Naive thymus-derived CD4-positive, alpha-beta T cell (primary cell): ENCODE measurements at regions of chr16 and their contacts with region 1.

Region 1: DNA sequence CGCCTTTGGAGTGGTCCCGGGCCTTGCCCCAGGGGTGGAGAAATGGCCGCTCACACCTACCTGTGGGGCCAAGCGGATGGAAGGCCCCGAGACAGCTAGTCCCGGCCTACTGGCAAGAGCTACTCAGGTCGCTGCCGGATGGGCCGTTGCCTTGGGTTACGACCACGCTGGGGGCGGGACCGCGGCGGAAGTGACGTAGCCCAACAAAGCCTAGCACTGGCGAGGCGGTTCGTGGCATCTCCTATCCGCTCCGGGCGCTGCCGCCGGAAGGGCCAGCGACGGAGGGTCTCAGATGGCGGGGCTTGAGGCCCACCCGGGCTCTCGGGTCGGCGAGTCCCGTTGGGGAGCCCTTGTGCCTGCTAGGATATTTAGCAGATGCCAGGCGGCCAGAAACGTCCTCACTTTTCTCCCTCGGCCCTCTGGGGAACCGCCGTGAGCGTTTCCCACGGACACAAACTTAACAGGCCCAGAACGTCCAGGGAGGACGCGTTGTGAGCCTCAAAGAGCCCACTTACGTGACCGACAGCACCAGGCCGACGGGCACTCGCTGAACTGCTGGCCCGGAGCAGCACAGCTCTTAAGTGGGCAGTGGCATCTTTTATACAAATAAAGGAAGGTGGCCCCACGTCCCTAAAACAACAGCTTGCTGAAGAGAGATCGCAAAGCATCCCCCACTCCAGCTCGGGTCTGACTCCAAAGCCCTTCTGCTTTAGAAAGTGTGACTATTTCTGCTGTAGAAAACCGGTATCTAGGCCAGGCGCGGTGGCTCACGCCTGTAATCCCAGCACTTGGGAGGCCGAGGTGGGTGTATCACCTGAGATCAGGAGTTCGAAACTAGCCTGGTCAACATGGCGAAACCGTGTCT is at the start of gene C16orf46:
- DNase-seq: peak; percentile 93 to 99 (median 97)
- ATAC-seq: peak; percentile 85
- H3K4me3 ChIP-seq: peak within 1 kb of the TSS; percentile 96
- H3K4me3 Mint-ChIP-seq: peak within 1 kb of the TSS in 2 of 10 donors; percentile 39 to 57
- H3K27ac ChIP-seq: peak within 1 kb of the TSS; percentile 89
- H3K27ac Mint-ChIP-seq: peak within 1 kb of the TSS in 2 of 9 donors; percentile 89 to 91
- H3K4me1 ChIP-seq: peaks cover 10 to 11% of the 10 kb centered on the region in 2 donors
- H3K4me1 Mint-ChIP-seq: peaks cover 0 to 4% (median 0%) of the 10 kb centered on the region in 7 donors
- H3K27me3 ChIP-seq: no peaks in the 10 kb centered on the region
- H3K27me3 Mint-ChIP-seq: peaks cover 0 to 10% (median 0%) of the 10 kb centered on the region in 5 donors
- total RNA-seq, gene C16orf46: 0.24 to 2.1 (median 0.70) TPM in 4 of 5 experiments, not detected in the other

Region 2: GRCh38 chr16:80804056-80804450 is 273.3 kb before region 1 on chr16:
- CTCF ChIA-PET with region 1: no interaction called
- POLR2A ChIA-PET with region 1: no interaction called
- intact Hi-C with region 1: loop called (anchors 10 kb)
- DNase-seq: peak; percentile 26 to 69 (median 52)
- ATAC-seq: peak; percentile 69
- H3K4me3 ChIP-seq: no peak overlapping the region
- H3K4me3 Mint-ChIP-seq: peak overlapping the region; percentile 85 to 96 (median 94)
- H3K27ac ChIP-seq: no peak overlapping the region
- H3K27ac Mint-ChIP-seq: peak overlapping the region in 7 of 9 donors; percentile 46 to 98 (median 78)
- H3K4me1 ChIP-seq: peaks cover 0 to 10% of the 10 kb centered on the region in 2 donors
- H3K4me1 Mint-ChIP-seq: peaks cover 12 to 59% (median 18%) of the 10 kb centered on the region in 7 donors
- H3K27me3 ChIP-seq: no peaks in the 10 kb centered on the region
- H3K27me3 Mint-ChIP-seq: peaks cover 0 to 9% (median 0%) of the 10 kb centered on the region in 5 donors

Region 3: GRCh38 chr16:80948886-80949493 is 128.3 kb before region 1 on chr16:
- CTCF ChIA-PET with region 1: no interaction called
- POLR2A ChIA-PET with region 1: no interaction called
- intact Hi-C with region 1: no loop called
- DNase-seq: peak in 1 of 9 donors; percentile 40
- ATAC-seq: no peak
- H3K4me3 ChIP-seq: no peak overlapping the region
- H3K4me3 Mint-ChIP-seq: no peak overlapping the region
- H3K27ac ChIP-seq: no peak overlapping the region
- H3K27ac Mint-ChIP-seq: no peak overlapping the region
- H3K4me1 ChIP-seq: no peaks in the 10 kb centered on the region
- H3K4me1 Mint-ChIP-seq: peaks cover 0 to 3% (median 0%) of the 10 kb centered on the region in 7 donors
- H3K27me3 ChIP-seq: no peaks in the 10 kb centered on the region
- H3K27me3 Mint-ChIP-seq: peaks cover 2 to 23% (median 13%) of the 10 kb centered on the region in 5 donors

Region 4: GRCh38 chr16:81035398-81035974 is 41.8 kb before region 1 on chr16 and contains the start of gene ATMIN:
- CTCF ChIA-PET with region 1: interaction called, 14 read pairs
- POLR2A ChIA-PET with region 1: interaction called, 13 read pairs
- intact Hi-C with region 1: loop called (anchors 1 kb)
- DNase-seq: peak; percentile 80 to 96 (median 90)
- ATAC-seq: peak; percentile 100
- H3K4me3 ChIP-seq: peak within 1 kb of the TSS; percentile 52
- H3K4me3 Mint-ChIP-seq: peak within 1 kb of the TSS; percentile 79 to 92 (median 89)
- H3K27ac ChIP-seq: peak within 1 kb of the TSS; percentile 69
- H3K27ac Mint-ChIP-seq: peak within 1 kb of the TSS; percentile 29 to 87 (median 77)
- H3K4me1 ChIP-seq: peaks cover 20 to 24% of the 10 kb centered on the region in 2 donors
- H3K4me1 Mint-ChIP-seq: peaks cover 16 to 44% (median 39%) of the 10 kb centered on the region in 7 donors
- H3K27me3 ChIP-seq: no peaks in the 10 kb centered on the region
- H3K27me3 Mint-ChIP-seq: no peaks in the 10 kb centered on the region
- total RNA-seq, gene ATMIN: 29.1 to 46.9 (median 35.3) TPM

Region 5: DNA sequence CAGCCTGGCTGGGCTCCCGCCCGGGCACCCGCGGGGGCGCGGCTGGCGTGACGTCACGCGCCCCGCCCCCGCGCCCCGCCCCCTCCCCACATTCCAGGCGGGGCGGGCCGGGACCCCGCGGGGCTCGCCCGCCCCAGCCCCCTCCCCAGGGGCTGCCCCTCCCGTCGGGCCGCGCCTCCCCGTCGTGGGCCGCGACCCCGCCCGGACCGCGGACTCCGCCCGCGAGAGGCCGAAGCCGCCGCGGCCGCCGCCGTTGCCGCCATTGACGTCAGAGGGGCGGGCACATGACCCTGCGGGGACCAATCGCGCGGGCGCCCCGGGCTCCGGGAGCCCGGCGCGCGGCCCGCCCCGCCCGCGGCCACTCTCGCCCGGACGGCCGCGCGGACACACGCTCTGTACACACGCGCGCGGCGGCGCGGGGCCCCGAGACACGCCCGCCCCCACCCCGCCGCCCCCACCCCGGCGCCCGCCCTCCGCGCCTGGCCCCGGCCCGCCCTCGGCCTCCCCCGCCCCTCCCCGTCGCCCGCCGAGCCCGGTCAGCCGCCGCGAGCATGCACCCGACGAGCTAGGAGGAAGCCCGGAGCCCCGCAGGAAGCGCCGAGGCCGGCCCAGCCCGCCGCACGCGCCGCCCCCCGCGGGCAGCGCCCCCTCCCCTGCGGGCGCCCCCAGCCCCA is 367.3 kb after region 1 on chr16 and contains the start of gene CMIP:
- CTCF ChIA-PET with region 1: no interaction called
- POLR2A ChIA-PET with region 1: no interaction called
- intact Hi-C with region 1: loop called in 1 of 2 experiments (anchors 5 kb)
- DNase-seq: peak; percentile 66 to 89 (median 79)
- ATAC-seq: peak; percentile 88
- H3K4me3 ChIP-seq: peak within 1 kb of the TSS; percentile 91
- H3K4me3 Mint-ChIP-seq: peak within 1 kb of the TSS; percentile 85 to 94 (median 90)
- H3K27ac ChIP-seq: peak within 1 kb of the TSS; percentile 77
- H3K27ac Mint-ChIP-seq: peak within 1 kb of the TSS; percentile 90 to 97 (median 94)
- H3K4me1 ChIP-seq: peaks cover 35 to 37% of the 10 kb centered on the region in 2 donors
- H3K4me1 Mint-ChIP-seq: peaks cover 26 to 54% (median 48%) of the 10 kb centered on the region in 7 donors
- H3K27me3 ChIP-seq: no peaks in the 10 kb centered on the region
- H3K27me3 Mint-ChIP-seq: peaks cover 0 to 41% (median 0%) of the 10 kb centered on the region in 5 donors
- total RNA-seq, gene CMIP: 28.9 to 75.4 (median 38.2) TPM

Region 6: GRCh38 chr16:81745704-81746558 is 668.6 kb after region 1 on chr16:
- CTCF ChIA-PET with region 1: no interaction called
- POLR2A ChIA-PET with region 1: no interaction called
- intact Hi-C with region 1: loop called (anchors 1 to 5 kb)
- DNase-seq: peak; percentile 53 to 75 (median 71)
- ATAC-seq: peak; percentile 97
- H3K4me3 ChIP-seq: peak overlapping the region; percentile 66
- H3K4me3 Mint-ChIP-seq: peak overlapping the region; percentile 82 to 90 (median 86)
- H3K27ac ChIP-seq: peak overlapping the region; percentile 65
- H3K27ac Mint-ChIP-seq: peak overlapping the region; percentile 83 to 95 (median 88)
- H3K4me1 ChIP-seq: peaks cover 4 to 10% of the 10 kb centered on the region in 2 donors
- H3K4me1 Mint-ChIP-seq: peaks cover 6 to 33% (median 10%) of the 10 kb centered on the region in 7 donors
- H3K27me3 ChIP-seq: no peaks in the 10 kb centered on the region
- H3K27me3 Mint-ChIP-seq: peaks cover 0 to 6% (median 0%) of the 10 kb centered on the region in 5 donors

Region 7: DNA sequence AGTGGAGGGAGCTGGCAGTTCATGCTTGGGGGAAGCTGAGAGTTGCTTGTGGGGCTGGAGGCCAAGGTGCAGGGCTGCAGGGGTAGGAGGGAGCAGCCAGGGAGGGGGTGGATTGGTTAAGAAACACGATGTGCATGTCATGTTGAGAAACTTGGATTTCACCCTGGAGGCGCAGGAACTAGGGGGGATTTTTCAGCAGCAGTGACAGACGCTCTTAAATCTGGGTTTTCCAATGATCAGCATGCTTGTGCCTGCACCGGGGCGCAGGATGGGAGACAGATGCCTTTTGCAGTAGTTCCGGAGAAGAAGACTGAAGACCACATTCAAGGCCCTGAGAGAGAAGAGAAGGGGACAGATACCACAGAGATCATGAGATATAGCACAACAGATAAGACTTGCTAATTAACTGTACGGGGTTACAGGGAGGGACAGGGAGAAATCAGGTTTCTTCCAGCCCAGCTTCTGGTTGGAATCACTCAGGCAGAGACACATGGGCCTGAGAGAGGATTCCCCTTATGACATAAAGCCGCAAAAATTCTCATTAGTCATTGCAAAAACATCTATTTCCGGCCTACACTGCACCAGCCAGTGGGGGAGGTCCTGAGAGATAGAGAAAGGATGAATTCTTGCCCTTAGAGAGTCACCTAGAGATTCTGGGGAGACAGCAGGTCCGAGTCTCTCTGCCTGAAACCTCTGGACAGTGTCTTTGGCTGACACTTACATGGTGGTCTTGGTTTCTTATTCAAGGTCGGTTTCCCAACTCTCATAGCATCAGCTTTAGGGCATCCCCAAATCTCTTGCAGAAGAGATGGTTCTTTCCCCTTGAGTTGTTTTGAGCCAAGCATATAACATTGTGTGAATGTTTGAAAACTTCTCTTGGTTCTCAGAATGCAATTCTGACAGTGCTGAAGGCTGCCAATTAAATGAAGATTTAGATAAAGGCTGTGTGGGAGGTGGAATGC is 1576.5 kb after region 1 on chr16:
- CTCF ChIA-PET with region 1: no interaction called
- POLR2A ChIA-PET with region 1: no interaction called
- intact Hi-C with region 1: loop called in 1 of 2 experiments (anchors 10 kb)
- DNase-seq: peak in 8 of 9 donors; percentile 11 to 54 (median 36)
- ATAC-seq: peak; percentile 70
- H3K4me3 ChIP-seq: peak overlapping the region; percentile 2
- H3K4me3 Mint-ChIP-seq: peak overlapping the region; percentile 27 to 77 (median 62)
- H3K27ac ChIP-seq: peak overlapping the region; percentile 57
- H3K27ac Mint-ChIP-seq: peak overlapping the region; percentile 48 to 95 (median 87)
- H3K4me1 ChIP-seq: peaks cover 71 to 88% of the 10 kb centered on the region in 2 donors
- H3K4me1 Mint-ChIP-seq: peaks cover 43 to 97% (median 84%) of the 10 kb centered on the region in 7 donors
- H3K27me3 ChIP-seq: no peaks in the 10 kb centered on the region
- H3K27me3 Mint-ChIP-seq: no peaks in the 10 kb centered on the region